HepG2 (cell line): ENCODE measurements at regions of chr19 and their contacts with region 1.

Region 1: DNA sequence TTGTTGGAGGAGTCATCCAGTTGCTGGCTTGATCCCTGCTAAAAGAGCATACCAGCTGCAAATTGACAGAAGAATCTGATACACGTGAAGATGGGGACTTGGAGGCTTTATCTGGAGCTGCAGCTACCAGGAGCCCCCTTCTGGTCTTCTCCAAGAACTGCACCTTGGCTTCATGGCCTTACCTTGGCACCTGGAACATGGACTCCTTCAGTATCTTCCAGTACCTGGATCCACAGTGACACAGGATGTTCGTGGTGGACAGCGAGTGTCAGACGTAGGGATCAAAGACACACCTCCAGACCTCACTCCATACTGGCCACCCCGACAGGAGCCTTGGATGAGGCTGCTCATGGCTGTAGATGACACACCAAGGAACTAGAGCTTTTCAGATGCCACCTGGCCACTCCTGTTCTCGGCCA is 9.9 kb upstream of the ACSBG2 start:
- DNase-seq: peak; percentile 75
- ATAC-seq: peak; percentile 85
- H3K4me3 ChIP-seq: no peak overlapping the region
- H3K27ac ChIP-seq: no peak overlapping the region
- H3K4me1 ChIP-seq: no peaks in the 10 kb centered on the region
- H3K27me3 ChIP-seq: no peaks in the 10 kb centered on the region
- CTCF ChIP-seq: peak; percentile 91
- EP300 ChIP-seq: no peak
- POLR2A ChIP-seq: no peak
- RAD21 ChIP-seq: peak; percentile 86

Region 2: GRCh38 chr19:5891938-5892771 is 233.4 kb before region 1 on chr19:
- CTCF ChIA-PET with region 1: no interaction called
- POLR2A ChIA-PET with region 1: no interaction called
- in situ Hi-C with region 1: no loop called
- intact Hi-C with region 1: no loop called
- DNase-seq: no peak
- ATAC-seq: peak; percentile 81
- H3K4me3 ChIP-seq: peak overlapping the region in 1 of 3 experiments; percentile 14; a peak in 1 of 6 replicates
- H3K27ac ChIP-seq: no peak overlapping the region
- H3K4me1 ChIP-seq: peaks cover 44% of the 10 kb centered on the region
- H3K27me3 ChIP-seq: no peaks in the 10 kb centered on the region
- CTCF ChIP-seq: peak; percentile 98
- EP300 ChIP-seq: no peak
- POLR2A ChIP-seq: peak in 1 of 2 experiments; percentile 68; a peak in 2 of 4 replicates
- RAD21 ChIP-seq: peak; percentile 98

Region 3: GRCh38 chr19:6048808-6049405 is 76.7 kb before region 1 on chr19:
- CTCF ChIA-PET with region 1: interaction called, 153 read pairs
- POLR2A ChIA-PET with region 1: interaction called, 5 read pairs
- in situ Hi-C with region 1: loop called (anchors 5 kb)
- intact Hi-C with region 1: loop called (anchors 1 kb)
- DNase-seq: peak; percentile 69
- ATAC-seq: peak; percentile 96
- H3K4me3 ChIP-seq: no peak overlapping the region
- H3K27ac ChIP-seq: no peak overlapping the region
- H3K4me1 ChIP-seq: peaks cover 13% of the 10 kb centered on the region
- H3K27me3 ChIP-seq: no peaks in the 10 kb centered on the region
- CTCF ChIP-seq: peak; percentile 87
- EP300 ChIP-seq: no peak
- POLR2A ChIP-seq: no peak
- RAD21 ChIP-seq: peak; percentile 84

Region 4: GRCh38 chr19:6108721-6109633 is 16.6 kb before region 1 on chr19:
- CTCF ChIA-PET with region 1: no interaction called
- POLR2A ChIA-PET with region 1: no interaction called
- in situ Hi-C with region 1: no loop called
- intact Hi-C with region 1: loop called (anchors 1 kb)
- DNase-seq: no peak
- ATAC-seq: no peak
- H3K4me3 ChIP-seq: peak overlapping the region in 2 of 3 experiments; percentile 57 to 73; a peak in 3 of 6 replicates
- H3K27ac ChIP-seq: no peak overlapping the region
- H3K4me1 ChIP-seq: peaks cover 32% of the 10 kb centered on the region
- H3K27me3 ChIP-seq: peaks cover 0 to 10% of the 10 kb centered on the region in 2 experiments; a peak in 2 of 5 replicates
- CTCF ChIP-seq: no peak
- EP300 ChIP-seq: no peak
- POLR2A ChIP-seq: no peak
- RAD21 ChIP-seq: no peak

Region 5: GRCh38 chr19:6138066-6138465 is 12.5 kb after region 1 on chr19:
- CTCF ChIA-PET with region 1: no interaction called
- POLR2A ChIA-PET with region 1: no interaction called
- in situ Hi-C with region 1: no loop called
- intact Hi-C with region 1: loop called (anchors 1 kb)
- DNase-seq: no peak
- ATAC-seq: no peak
- H3K4me3 ChIP-seq: no peak overlapping the region
- H3K27ac ChIP-seq: no peak overlapping the region
- H3K4me1 ChIP-seq: no peaks in the 10 kb centered on the region
- H3K27me3 ChIP-seq: no peaks in the 10 kb centered on the region
- CTCF ChIP-seq: no peak
- EP300 ChIP-seq: no peak
- POLR2A ChIP-seq: no peak
- RAD21 ChIP-seq: no peak